ENCODE measurements at regions of chr15 and their contacts with region 1.

Region 1: GRCh38 chr15:60444289-60444912 is 34.5 kb downstream of the ICE2 start:
- DNase-seq: no peak
- H3K4me3 ChIP-seq: no peak overlapping the region
- H3K27ac ChIP-seq: no peak overlapping the region
- H3K4me1 ChIP-seq: no peaks in the 10 kb centered on the region
- H3K27me3 ChIP-seq: no peaks in the 10 kb centered on the region
- CTCF ChIP-seq: peak; percentile 73

Region 2: DNA sequence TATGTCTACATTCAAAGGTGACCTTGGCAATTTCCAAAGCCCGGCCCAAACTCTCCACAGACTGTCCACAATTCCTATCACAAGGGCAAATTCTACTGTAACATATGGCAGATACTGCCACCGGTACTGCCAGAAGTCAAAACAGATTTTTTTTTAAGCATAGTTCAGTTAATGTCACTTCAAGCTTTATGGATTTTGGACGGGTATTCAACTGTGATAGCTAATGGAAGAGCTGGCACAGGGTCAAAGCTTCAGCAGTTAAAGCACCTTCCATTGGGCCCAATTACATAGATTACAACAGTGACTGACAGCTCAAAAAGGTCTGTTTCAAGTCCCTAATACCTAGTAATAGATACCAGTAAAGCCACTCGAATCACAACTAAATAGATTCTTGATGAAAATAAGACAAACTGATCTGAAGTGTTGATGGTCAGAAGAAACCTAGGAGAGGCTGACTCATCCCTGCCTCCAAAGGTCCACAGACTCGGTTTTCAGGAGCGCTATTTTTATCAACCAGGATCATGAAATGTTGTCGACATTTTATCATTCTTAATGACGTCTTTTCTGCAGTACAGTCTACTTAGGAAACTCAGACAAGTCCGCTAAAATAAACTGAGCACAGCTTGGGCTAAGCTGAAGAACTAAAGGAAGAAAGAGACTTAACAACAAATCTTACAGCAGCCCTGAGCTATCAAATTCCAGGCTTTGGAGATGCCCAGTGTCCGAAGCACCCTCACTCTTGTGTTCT is 85.3 kb before region 1 on chr15:
- intact Hi-C with region 1: loop called (anchors 10 kb)
- DNase-seq: no peak
- H3K4me3 ChIP-seq: peak overlapping the region; percentile 12
- H3K27ac ChIP-seq: peak overlapping the region; percentile 64
- H3K4me1 ChIP-seq: peaks cover 69% of the 10 kb centered on the region
- H3K27me3 ChIP-seq: no peaks in the 10 kb centered on the region
- CTCF ChIP-seq: no peak

Region 3: DNA sequence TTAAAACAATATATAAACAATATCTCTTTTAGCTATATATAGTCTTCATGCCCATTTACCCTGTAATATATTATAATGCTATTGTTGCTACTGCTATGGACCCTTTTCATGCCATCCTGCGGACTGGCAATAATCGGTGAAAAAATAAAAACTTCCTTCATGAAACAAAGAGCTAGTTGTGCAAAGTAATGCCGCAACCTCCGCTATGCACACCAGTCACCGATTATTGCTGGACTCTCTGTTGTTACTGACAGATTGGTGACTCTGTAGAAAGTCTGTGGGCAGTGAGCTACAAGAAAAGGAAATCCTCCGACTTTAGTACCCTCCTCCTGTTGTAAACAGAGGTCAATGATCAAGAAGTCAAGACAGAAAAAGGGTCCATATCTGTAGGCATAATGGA is 52.5 kb after region 1 on chr15:
- intact Hi-C with region 1: no loop called
- DNase-seq: no peak
- H3K4me3 ChIP-seq: no peak overlapping the region
- H3K27ac ChIP-seq: no peak overlapping the region
- H3K4me1 ChIP-seq: no peaks in the 10 kb centered on the region
- H3K27me3 ChIP-seq: no peaks in the 10 kb centered on the region
- CTCF ChIP-seq: no peak

Region 4: GRCh38 chr15:61511756-61512155 is 1067.4 kb after region 1 on chr15:
- intact Hi-C with region 1: no loop called
- DNase-seq: no peak
- H3K4me3 ChIP-seq: no peak overlapping the region
- H3K27ac ChIP-seq: no peak overlapping the region
- H3K4me1 ChIP-seq: no peaks in the 10 kb centered on the region
- H3K27me3 ChIP-seq: peaks cover 46% of the 10 kb centered on the region
- CTCF ChIP-seq: no peak